HCT116 (cell line): ENCODE measurements at regions of chr17 and their contacts with region 1.

Region 1: GRCh38 chr17:46836500-46836899 is 14.9 kb upstream of the WNT9B start:
- DNase-seq: no peak
- ATAC-seq: no peak
- H3K4me3 ChIP-seq: no peak overlapping the region
- H3K27ac ChIP-seq: no peak overlapping the region
- H3K4me1 ChIP-seq: peaks cover 0 to 3% of the 10 kb centered on the region in 2 experiments; a peak in 1 of 4 replicates
- H3K27me3 ChIP-seq: no peaks in the 10 kb centered on the region
- CTCF ChIP-seq: no peak
- POLR2A ChIP-seq: no peak
- RAD21 ChIP-seq: no peak

Region 2: DNA sequence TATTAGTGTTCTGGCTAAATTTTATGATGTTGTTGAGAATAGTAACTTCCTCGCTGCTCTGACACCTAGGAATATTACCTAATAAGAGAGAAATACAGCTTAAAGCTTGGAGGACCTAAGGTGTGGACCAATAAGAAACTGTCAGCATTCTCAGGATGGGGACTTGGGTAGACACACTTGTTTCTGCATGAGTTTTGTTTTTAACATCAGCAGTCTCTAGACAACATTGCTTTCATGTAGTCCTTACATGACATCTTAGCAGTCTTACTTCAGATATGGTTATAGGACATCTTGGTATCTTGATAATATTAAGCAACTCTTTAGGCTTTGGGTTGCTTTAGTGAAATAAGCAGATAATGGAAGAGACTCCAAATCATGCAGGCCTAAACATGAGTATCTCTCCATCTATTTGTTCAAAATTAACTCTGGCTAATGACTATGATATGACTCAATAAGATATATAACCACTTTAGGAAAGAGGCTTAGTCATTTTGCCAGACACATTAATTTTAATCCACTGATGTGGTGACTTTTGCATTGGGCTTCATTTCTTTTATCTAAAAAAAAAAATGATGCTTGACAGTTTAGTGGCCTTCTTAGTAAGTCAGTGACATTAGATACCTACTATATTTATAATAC is 102.5 kb before region 1 on chr17:
- CTCF ChIA-PET with region 1: no interaction called
- POLR2A ChIA-PET with region 1: no interaction called
- RAD21 ChIA-PET with region 1: no interaction called
- intact Hi-C with region 1: loop called (anchors 5 kb)
- DNase-seq: no peak
- ATAC-seq: no peak
- H3K4me3 ChIP-seq: no peak overlapping the region
- H3K27ac ChIP-seq: no peak overlapping the region
- H3K4me1 ChIP-seq: no peaks in the 10 kb centered on the region; a peak in 1 of 4 replicates
- H3K27me3 ChIP-seq: no peaks in the 10 kb centered on the region
- CTCF ChIP-seq: no peak
- POLR2A ChIP-seq: no peak
- RAD21 ChIP-seq: no peak